GM12878 (cell line): ENCODE measurements at regions of chr15 and their contacts with region 1.

Region 1: DNA sequence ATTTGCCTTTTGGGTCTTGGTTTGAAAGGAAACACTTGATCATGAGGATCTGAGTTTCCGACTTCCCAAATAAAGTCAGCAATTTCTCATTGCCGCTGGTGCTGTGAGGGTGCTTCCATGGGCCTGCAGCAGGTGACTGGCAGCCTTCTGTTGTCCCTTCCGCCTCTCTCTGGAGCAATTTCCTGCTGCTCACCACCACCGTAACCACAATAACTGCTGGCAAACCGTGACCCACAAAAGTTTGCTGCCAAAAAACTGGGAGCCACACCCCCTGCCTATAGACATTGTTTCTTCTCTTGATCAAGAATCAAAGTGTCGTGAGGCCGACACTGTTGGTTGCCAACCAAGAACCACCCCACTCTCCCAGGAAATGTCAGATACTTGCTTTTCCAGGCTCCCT is 164.0 kb downstream of the NR2F2 start:
- DNase-seq: no peak
- ATAC-seq: no peak
- H3K4me3 ChIP-seq: no peak overlapping the region
- H3K27ac ChIP-seq: no peak overlapping the region
- H3K4me1 ChIP-seq: no peaks in the 10 kb centered on the region
- H3K27me3 ChIP-seq: no peaks in the 10 kb centered on the region
- CTCF ChIP-seq: no peak
- EP300 ChIP-seq: no peak
- POLR2A ChIP-seq: no peak
- RAD21 ChIP-seq: no peak

Region 2: GRCh38 chr15:96146726-96147125 is 347.8 kb before region 1 on chr15:
- CTCF ChIA-PET with region 1: no interaction called
- POLR2A ChIA-PET with region 1: no interaction called
- RAD21 ChIA-PET with region 1: no interaction called
- SMC1A ChIA-PET with region 1: no interaction called
- in situ Hi-C with region 1: no loop called
- intact Hi-C with region 1: no loop called
- DNase-seq: no peak
- ATAC-seq: no peak
- H3K4me3 ChIP-seq: no peak overlapping the region
- H3K27ac ChIP-seq: no peak overlapping the region
- H3K4me1 ChIP-seq: no peaks in the 10 kb centered on the region
- H3K27me3 ChIP-seq: no peaks in the 10 kb centered on the region
- CTCF ChIP-seq: no peak
- EP300 ChIP-seq: no peak
- POLR2A ChIP-seq: no peak
- RAD21 ChIP-seq: no peak

Region 3: GRCh38 chr15:96585484-96586386 is 91.2 kb after region 1 on chr15:
- CTCF ChIA-PET with region 1: interaction called, 20 read pairs
- POLR2A ChIA-PET with region 1: interaction called, 3 read pairs
- RAD21 ChIA-PET with region 1: interaction called, 20 read pairs
- SMC1A ChIA-PET with region 1: interaction called, 26 read pairs
- in situ Hi-C with region 1: no loop called
- intact Hi-C with region 1: loop called (anchors 5 kb)
- DNase-seq: no peak
- ATAC-seq: peak; percentile 73
- H3K4me3 ChIP-seq: no peak overlapping the region
- H3K27ac ChIP-seq: no peak overlapping the region
- H3K4me1 ChIP-seq: no peaks in the 10 kb centered on the region
- H3K27me3 ChIP-seq: no peaks in the 10 kb centered on the region
- CTCF ChIP-seq: peak in 2 of 3 experiments; percentile 10 to 35; a peak in 2 of 6 replicates
- EP300 ChIP-seq: no peak
- POLR2A ChIP-seq: no peak
- RAD21 ChIP-seq: no peak

Region 4: GRCh38 chr15:96893159-96893906 is 398.8 kb after region 1 on chr15:
- CTCF ChIA-PET with region 1: interaction called, 7 read pairs
- POLR2A ChIA-PET with region 1: no interaction called
- RAD21 ChIA-PET with region 1: interaction called, 9 read pairs
- SMC1A ChIA-PET with region 1: interaction called, 7 read pairs
- in situ Hi-C with region 1: no loop called
- intact Hi-C with region 1: loop called (anchors 2 kb)
- DNase-seq: no peak
- ATAC-seq: peak; percentile 79
- H3K4me3 ChIP-seq: no peak overlapping the region
- H3K27ac ChIP-seq: no peak overlapping the region
- H3K4me1 ChIP-seq: no peaks in the 10 kb centered on the region
- H3K27me3 ChIP-seq: no peaks in the 10 kb centered on the region
- CTCF ChIP-seq: peak; percentile 16 to 69 (median 56); a peak in 5 of 6 replicates
- EP300 ChIP-seq: no peak
- POLR2A ChIP-seq: no peak
- RAD21 ChIP-seq: peak; percentile 34; the same call in 1 of the 2 replicates

Region 5: GRCh38 chr15:97248376-97248775 is 753.9 kb after region 1 on chr15:
- CTCF ChIA-PET with region 1: interaction called, 17 read pairs
- POLR2A ChIA-PET with region 1: no interaction called
- RAD21 ChIA-PET with region 1: interaction called, 9 read pairs
- SMC1A ChIA-PET with region 1: interaction called, 7 read pairs
- in situ Hi-C with region 1: no loop called
- intact Hi-C with region 1: no loop called
- DNase-seq: no peak
- ATAC-seq: no peak
- H3K4me3 ChIP-seq: no peak overlapping the region
- H3K27ac ChIP-seq: no peak overlapping the region
- H3K4me1 ChIP-seq: no peaks in the 10 kb centered on the region
- H3K27me3 ChIP-seq: no peaks in the 10 kb centered on the region
- CTCF ChIP-seq: no peak
- EP300 ChIP-seq: no peak
- POLR2A ChIP-seq: no peak
- RAD21 ChIP-seq: no peak